Heart left ventricle (tissue), 16 donors: ENCODE measurements at regions of chr9 and their contacts with region 1.

Region 1: GRCh38 chr9:80632041-80632440 is 1057.3 kb downstream of the TLE1 start:
- DNase-seq: no peak
- ATAC-seq: no peak
- H3K4me3 ChIP-seq: no peak overlapping the region
- H3K27ac ChIP-seq: no peak overlapping the region
- H3K4me1 ChIP-seq: no peaks in the 10 kb centered on the region
- H3K27me3 ChIP-seq: no peaks in the 10 kb centered on the region
- CTCF ChIP-seq: no peak
- POLR2A ChIP-seq: no peak

Region 2: GRCh38 chr9:80552931-80553330 is 79.1 kb before region 1 on chr9:
- intact Hi-C with region 1: loop called in 1 of 10 experiments (anchors 10 kb)
- DNase-seq: peak in 2 of 5 donors; percentile 18 to 42
- ATAC-seq: peak in 2 of 4 donors; percentile 60 to 71
- H3K4me3 ChIP-seq: no peak overlapping the region
- H3K27ac ChIP-seq: no peak overlapping the region
- H3K4me1 ChIP-seq: no peaks in the 10 kb centered on the region
- H3K27me3 ChIP-seq: peaks cover 0 to 4% (median 0%) of the 10 kb centered on the region in 9 donors
- CTCF ChIP-seq: no peak
- POLR2A ChIP-seq: no peak